Heart right ventricle (tissue), 16 donors: ENCODE measurements at regions of chr1 and their contacts with region 1.

Region 1: DNA sequence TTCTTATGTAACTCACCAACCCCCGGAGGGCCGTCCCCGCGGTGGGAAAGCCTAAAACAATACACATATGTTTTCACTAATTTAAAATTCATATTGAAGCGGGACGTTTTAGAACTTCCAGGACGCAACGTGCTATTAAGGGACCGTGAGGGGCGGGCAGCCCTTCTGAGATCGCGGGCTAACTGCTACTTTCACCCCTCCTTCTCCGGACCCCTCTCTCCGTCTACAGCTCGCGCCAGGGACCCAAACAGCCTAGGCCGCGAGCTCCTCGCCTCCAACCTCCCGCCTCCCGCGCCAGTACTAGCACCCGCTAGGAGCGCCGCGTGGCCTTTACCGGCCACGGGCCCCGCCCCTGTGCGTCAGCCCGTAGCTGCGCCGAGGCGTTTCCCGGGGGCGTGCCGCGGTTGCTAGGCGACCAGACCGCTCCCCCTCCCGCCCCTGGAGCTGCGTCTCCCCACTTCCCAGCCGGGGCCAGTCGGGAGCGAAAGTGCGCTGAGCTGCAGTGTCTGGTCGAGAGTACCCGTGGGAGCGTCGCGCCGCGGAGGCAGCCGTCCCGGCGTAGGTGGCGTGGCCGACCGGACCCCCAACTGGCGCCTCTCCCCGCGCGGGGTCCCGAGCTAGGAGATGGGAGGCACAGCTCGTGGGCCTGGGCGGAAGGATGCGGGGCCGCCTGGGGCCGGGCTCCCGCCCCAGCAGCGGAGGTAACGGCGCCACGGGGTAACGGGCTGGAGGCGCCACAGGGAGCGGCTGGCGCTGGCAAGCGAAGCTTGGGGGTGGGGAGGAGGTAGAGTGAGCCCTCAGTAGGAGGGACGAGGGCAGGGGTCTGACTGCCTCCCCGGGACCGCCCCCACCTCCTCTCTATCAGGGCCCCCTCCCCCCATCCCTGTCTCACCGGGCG is at the start of gene DYRK3:
- DNase-seq: peak; percentile 94 to 97
- ATAC-seq: peak; percentile 98 to 99 (median 98)
- H3K4me3 ChIP-seq: peak within 1 kb of the TSS; percentile 77 to 98 (median 94)
- H3K27ac ChIP-seq: peak within 1 kb of the TSS; percentile 66 to 94 (median 89)
- H3K4me1 ChIP-seq: peaks cover 0 to 62% (median 30%) of the 10 kb centered on the region in 9 donors
- H3K27me3 ChIP-seq: peaks cover 0 to 10% (median 0%) of the 10 kb centered on the region in 7 donors
- CTCF ChIP-seq: peak in 2 of 9 donors; percentile 40
- total RNA-seq, gene DYRK3: 10.4 to 27.9 (median 20.8) TPM

Region 2: DNA sequence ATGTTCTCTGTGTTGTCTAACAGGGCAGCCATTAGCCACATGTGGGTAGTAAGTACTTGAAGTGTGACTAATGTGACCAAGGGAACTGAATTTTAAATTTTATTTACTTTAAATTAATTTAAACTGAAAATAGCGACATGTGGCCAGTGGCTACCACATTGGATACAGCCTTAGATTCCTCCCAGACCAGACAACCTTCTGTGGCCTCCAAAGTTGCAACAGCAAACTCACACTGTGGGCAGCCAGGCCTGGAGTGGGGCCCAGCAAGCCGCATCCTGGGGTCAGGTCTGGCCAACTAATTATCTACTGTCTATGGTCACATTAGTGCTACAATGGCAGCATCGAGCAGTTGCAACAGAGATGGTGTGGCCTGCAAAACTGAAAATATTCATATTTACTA is 34.8 kb before region 1 on chr1:
- intact Hi-C with region 1: no loop called
- DNase-seq: no peak
- ATAC-seq: no peak
- H3K4me3 ChIP-seq: no peak overlapping the region
- H3K27ac ChIP-seq: no peak overlapping the region
- H3K4me1 ChIP-seq: no peaks in the 10 kb centered on the region
- H3K27me3 ChIP-seq: no peaks in the 10 kb centered on the region
- CTCF ChIP-seq: no peak

Region 3: GRCh38 chr1:206651958-206652890 is 16.9 kb after region 1 on chr1:
- intact Hi-C with region 1: loop called in 1 of 10 experiments (anchors 2 kb)
- DNase-seq: no peak
- ATAC-seq: no peak
- H3K4me3 ChIP-seq: no peak overlapping the region
- H3K27ac ChIP-seq: peak overlapping the region in 3 of 10 donors; percentile 42 to 96 (median 74)
- H3K4me1 ChIP-seq: peaks cover 33 to 94% (median 72%) of the 10 kb centered on the region in 9 donors
- H3K27me3 ChIP-seq: no peaks in the 10 kb centered on the region
- CTCF ChIP-seq: no peak

Region 4: GRCh38 chr1:206725109-206725963 is 90.0 kb after region 1 on chr1:
- intact Hi-C with region 1: loop called in 6 of 10 experiments (anchors 5 to 10 kb)
- DNase-seq: no peak
- ATAC-seq: no peak
- H3K4me3 ChIP-seq: no peak overlapping the region
- H3K27ac ChIP-seq: peak overlapping the region in 9 of 10 donors; percentile 12 to 95 (median 86)
- H3K4me1 ChIP-seq: peaks cover 35 to 95% (median 84%) of the 10 kb centered on the region in 9 donors
- H3K27me3 ChIP-seq: no peaks in the 10 kb centered on the region
- CTCF ChIP-seq: peak; percentile 30 to 75 (median 54)

Region 5: DNA sequence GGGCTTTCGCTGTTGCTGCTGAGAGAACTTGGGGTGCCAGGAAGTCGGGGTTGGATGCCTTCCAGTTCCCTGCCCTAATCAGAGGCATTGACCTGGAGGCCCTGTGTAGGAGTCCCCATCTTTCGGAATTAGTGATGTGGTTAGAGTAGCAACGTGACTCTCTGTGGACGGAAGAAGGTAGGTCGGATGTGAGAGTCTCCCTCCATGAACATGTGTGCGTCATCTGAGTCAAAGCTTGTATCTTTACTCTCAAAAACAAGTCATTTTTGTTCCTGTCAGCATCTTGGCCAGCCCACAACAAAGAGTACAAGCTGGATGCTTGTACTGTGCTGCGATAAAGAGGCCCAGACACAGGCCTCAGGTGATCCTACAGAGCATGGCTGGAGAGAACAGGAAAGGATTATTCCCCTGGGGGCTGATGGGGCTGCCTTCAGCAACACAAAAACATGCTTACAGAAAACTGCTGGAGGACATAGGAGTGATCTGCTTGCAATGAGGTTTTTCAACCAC is 167.9 kb after region 1 on chr1:
- intact Hi-C with region 1: loop called in 8 of 10 experiments (anchors 2 to 5 kb)
- DNase-seq: no peak
- ATAC-seq: peak in 2 of 8 donors; percentile 37 to 48
- H3K4me3 ChIP-seq: no peak overlapping the region
- H3K27ac ChIP-seq: peak overlapping the region in 1 of 10 donors; percentile 76
- H3K4me1 ChIP-seq: peaks cover 0 to 30% (median 0%) of the 10 kb centered on the region in 9 donors
- H3K27me3 ChIP-seq: peaks cover 0 to 5% (median 0%) of the 10 kb centered on the region in 7 donors
- CTCF ChIP-seq: no peak

Region 6: GRCh38 chr1:206912445-206913095 is 277.2 kb after region 1 on chr1:
- intact Hi-C with region 1: loop called (anchors 1 to 5 kb)
- DNase-seq: peak in 1 of 2 donors; percentile 76
- ATAC-seq: peak; percentile 28 to 82 (median 66)
- H3K4me3 ChIP-seq: no peak overlapping the region
- H3K27ac ChIP-seq: no peak overlapping the region
- H3K4me1 ChIP-seq: peaks cover 4 to 29% (median 6%) of the 10 kb centered on the region in 9 donors
- H3K27me3 ChIP-seq: peaks cover 0 to 32% (median 15%) of the 10 kb centered on the region in 7 donors
- CTCF ChIP-seq: peak; percentile 68 to 91 (median 85)

Region 7: GRCh38 chr1:207077470-207078377 is 442.4 kb after region 1 on chr1:
- intact Hi-C with region 1: loop called in 1 of 10 experiments (anchors 10 kb)
- DNase-seq: peak in 1 of 2 donors; percentile 74
- ATAC-seq: peak; percentile 62 to 86 (median 80)
- H3K4me3 ChIP-seq: no peak overlapping the region
- H3K27ac ChIP-seq: peak overlapping the region in 5 of 10 donors; percentile 12 to 69 (median 42)
- H3K4me1 ChIP-seq: peaks cover 0 to 58% (median 21%) of the 10 kb centered on the region in 9 donors
- H3K27me3 ChIP-seq: no peaks in the 10 kb centered on the region
- CTCF ChIP-seq: peak; percentile 71 to 94 (median 88)